Colonic mucosa (tissue), 4 donors: ENCODE measurements at regions of chr1 and their contacts with region 1.

Region 1: GRCh38 chr1:234309598-234310459 is 63.4 kb upstream of the COA6 start:
- DNase-seq: peak; percentile 72
- H3K4me3 ChIP-seq: no peak overlapping the region
- H3K27ac ChIP-seq: no peak overlapping the region
- H3K4me1 ChIP-seq: no peaks in the 10 kb centered on the region
- H3K27me3 ChIP-seq: no peaks in the 10 kb centered on the region
- CTCF ChIP-seq: peak; percentile 88

Region 2: GRCh38 chr1:233897325-233898162 is 412.3 kb before region 1 on chr1:
- intact Hi-C with region 1: no loop called
- DNase-seq: no peak
- H3K4me3 ChIP-seq: no peak overlapping the region
- H3K27ac ChIP-seq: no peak overlapping the region
- H3K4me1 ChIP-seq: no peaks in the 10 kb centered on the region
- H3K27me3 ChIP-seq: no peaks in the 10 kb centered on the region
- CTCF ChIP-seq: no peak

Region 3: GRCh38 chr1:234114648-234115307 is 195.1 kb before region 1 on chr1:
- intact Hi-C with region 1: loop called (anchors 2 kb)
- DNase-seq: peak; percentile 36
- H3K4me3 ChIP-seq: no peak overlapping the region
- H3K27ac ChIP-seq: no peak overlapping the region
- H3K4me1 ChIP-seq: no peaks in the 10 kb centered on the region
- H3K27me3 ChIP-seq: no peaks in the 10 kb centered on the region
- CTCF ChIP-seq: peak; percentile 59

Region 4: GRCh38 chr1:234355782-234356510 is 46.1 kb after region 1 on chr1:
- intact Hi-C with region 1: no loop called
- DNase-seq: no peak
- H3K4me3 ChIP-seq: no peak overlapping the region
- H3K27ac ChIP-seq: no peak overlapping the region
- H3K4me1 ChIP-seq: no peaks in the 10 kb centered on the region
- H3K27me3 ChIP-seq: no peaks in the 10 kb centered on the region
- CTCF ChIP-seq: no peak